ENCODE measurements at regions of chr7 and their contacts with region 1.

Region 1: GRCh38 chr7:65927489-65928448 is 54.2 kb downstream of the GUSB start:
- DNase-seq: peak; percentile 77 to 88
- H3K4me3 ChIP-seq: no peak overlapping the region
- H3K4me3 Mint-ChIP-seq: peak overlapping the region; percentile 13
- H3K27ac Mint-ChIP-seq: no peak overlapping the region
- H3K4me1 ChIP-seq: peaks cover 35% of the 10 kb centered on the region
- H3K4me1 Mint-ChIP-seq: peaks cover 19% of the 10 kb centered on the region
- H3K27me3 ChIP-seq: no peaks in the 10 kb centered on the region
- H3K27me3 Mint-ChIP-seq: no peaks in the 10 kb centered on the region
- CTCF ChIP-seq: no peak

Region 2: GRCh38 chr7:65872776-65873581 is 54.8 kb before region 1 on chr7 and contains the start of gene VKORC1L1:
- CTCF ChIA-PET with region 1: no interaction called
- POLR2A ChIA-PET with region 1: no interaction called
- intact Hi-C with region 1: loop called (anchors 5 kb)
- DNase-seq: peak; percentile 96 to 97
- H3K4me3 ChIP-seq: peak within 1 kb of the TSS; percentile 63
- H3K4me3 Mint-ChIP-seq: peak within 1 kb of the TSS; percentile 77
- H3K27ac Mint-ChIP-seq: peak within 1 kb of the TSS; percentile 87
- H3K4me1 ChIP-seq: no peaks in the 10 kb centered on the region
- H3K4me1 Mint-ChIP-seq: no peaks in the 10 kb centered on the region
- H3K27me3 ChIP-seq: no peaks in the 10 kb centered on the region
- H3K27me3 Mint-ChIP-seq: no peaks in the 10 kb centered on the region
- CTCF ChIP-seq: no peak
- total RNA-seq, gene VKORC1L1: 35.2 and 35.5 TPM in 2 replicates